Activated B cell treated with CpG ODN at 0.5 μM for 24 hours (primary cell): ENCODE measurements at regions of chr21 and their contacts with region 1.

Region 1: GRCh38 chr21:46431884-46432488 is 26.7 kb upstream of the DIP2A start:
- DNase-seq: no peak
- ATAC-seq: no peak
- H3K4me3 Mint-ChIP-seq: no peak overlapping the region
- H3K27ac Mint-ChIP-seq: no peak overlapping the region
- H3K4me1 Mint-ChIP-seq: peaks cover under 1% of the 10 kb centered on the region
- H3K27me3 Mint-ChIP-seq: no peaks in the 10 kb centered on the region
- CTCF ChIP-seq: no peak

Region 2: DNA sequence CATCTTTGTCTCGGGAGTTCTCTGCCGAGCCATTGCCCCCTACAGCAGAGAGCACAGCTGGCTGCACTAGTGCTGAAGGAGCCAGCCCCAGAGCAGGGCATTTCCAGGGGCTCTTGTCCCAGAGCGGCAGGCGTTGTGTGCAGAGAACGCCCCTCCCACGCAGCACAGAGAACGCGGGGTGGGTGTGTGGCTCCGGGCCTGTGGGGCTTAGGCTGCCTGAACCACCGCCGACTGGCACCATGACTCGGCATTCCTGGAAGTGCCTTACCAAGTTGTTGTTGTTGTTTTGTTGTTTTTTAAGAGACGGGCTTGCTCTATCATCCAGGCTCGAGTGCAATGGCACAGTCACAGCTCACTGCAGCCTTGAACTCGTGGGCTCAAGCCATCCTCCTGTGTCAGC is 11.0 kb after region 1 on chr21:
- CTCF ChIA-PET with region 1: no interaction called
- POLR2A ChIA-PET with region 1: no interaction called
- intact Hi-C with region 1: loop called (anchors 1 kb)
- DNase-seq: no peak
- ATAC-seq: no peak
- H3K4me3 Mint-ChIP-seq: no peak overlapping the region
- H3K27ac Mint-ChIP-seq: no peak overlapping the region
- H3K4me1 Mint-ChIP-seq: no peaks in the 10 kb centered on the region
- H3K27me3 Mint-ChIP-seq: no peaks in the 10 kb centered on the region
- CTCF ChIP-seq: no peak

Region 3: DNA sequence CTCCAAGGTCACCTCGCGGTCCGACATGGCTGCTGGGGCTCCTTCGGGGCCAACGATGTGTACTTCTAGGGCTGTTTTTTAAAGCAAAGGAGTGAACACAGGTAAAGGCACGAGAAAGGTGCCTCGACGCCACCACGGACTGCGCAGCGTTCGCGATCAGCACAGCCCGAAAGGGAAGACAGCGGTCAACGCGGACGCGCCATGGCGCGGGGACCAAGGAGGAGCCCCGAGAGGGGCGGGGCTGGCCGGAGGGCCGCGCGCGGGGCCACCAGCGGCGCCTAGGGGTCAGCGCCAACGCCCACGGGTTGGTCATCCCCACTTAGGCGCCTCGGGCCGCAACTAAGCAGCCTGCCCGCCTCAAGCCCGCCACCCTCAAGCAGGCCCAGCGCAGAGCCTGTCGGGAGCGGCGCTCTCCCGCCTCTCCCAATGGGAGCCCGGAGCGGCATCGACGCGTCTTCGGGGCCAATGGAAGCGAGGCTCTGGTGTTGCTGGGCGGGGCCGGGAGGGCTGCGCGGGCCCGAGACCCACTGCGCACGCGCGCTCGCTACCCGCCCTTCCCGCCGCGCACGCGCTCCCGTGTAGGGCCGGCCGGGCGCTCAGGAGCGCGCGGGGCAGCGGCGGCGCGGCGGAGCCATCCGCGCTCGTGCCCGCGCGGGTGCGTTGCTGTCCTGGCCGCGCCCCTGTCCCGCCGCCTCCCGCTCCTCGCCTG is 26.5 kb after region 1 on chr21 and contains the start of gene DIP2A:
- CTCF ChIA-PET with region 1: no interaction called
- POLR2A ChIA-PET with region 1: no interaction called
- intact Hi-C with region 1: no loop called
- DNase-seq: peak; percentile 95
- ATAC-seq: peak; percentile 98
- H3K4me3 Mint-ChIP-seq: peak within 1 kb of the TSS; percentile 88
- H3K27ac Mint-ChIP-seq: peak within 1 kb of the TSS; percentile 88
- H3K4me1 Mint-ChIP-seq: peaks cover 25% of the 10 kb centered on the region
- H3K27me3 Mint-ChIP-seq: no peaks in the 10 kb centered on the region
- CTCF ChIP-seq: no peak
- total RNA-seq, gene DIP2A: 28.2 and 32.1 TPM in 2 replicates

Region 4: DNA sequence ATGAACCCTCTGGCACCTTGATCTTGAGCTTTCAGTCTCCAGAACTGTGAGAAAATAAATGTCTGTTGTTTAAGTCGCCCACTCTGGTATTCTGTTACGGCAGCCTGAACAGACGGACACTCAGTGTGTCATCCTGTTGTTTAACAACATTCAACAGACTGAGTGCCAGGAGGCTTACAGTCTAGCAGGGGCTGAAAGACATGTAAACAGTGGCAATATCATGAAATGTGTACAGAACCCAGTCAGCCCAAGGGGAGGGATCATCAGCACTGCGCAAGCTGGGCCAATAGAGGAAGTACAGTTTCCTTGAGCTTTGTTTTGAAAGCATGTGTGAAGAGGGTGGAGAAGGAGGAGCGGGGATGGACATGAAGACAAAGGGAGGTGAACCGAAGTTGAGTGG is 40.3 kb after region 1 on chr21:
- CTCF ChIA-PET with region 1: no interaction called
- POLR2A ChIA-PET with region 1: no interaction called
- intact Hi-C with region 1: no loop called
- DNase-seq: no peak
- ATAC-seq: no peak
- H3K4me3 Mint-ChIP-seq: no peak overlapping the region
- H3K27ac Mint-ChIP-seq: peak overlapping the region; percentile 62
- H3K4me1 Mint-ChIP-seq: peaks cover 30% of the 10 kb centered on the region
- H3K27me3 Mint-ChIP-seq: no peaks in the 10 kb centered on the region
- CTCF ChIP-seq: no peak